ENCODE measurements at regions of chr1 and their contacts with region 1.

Region 1: DNA sequence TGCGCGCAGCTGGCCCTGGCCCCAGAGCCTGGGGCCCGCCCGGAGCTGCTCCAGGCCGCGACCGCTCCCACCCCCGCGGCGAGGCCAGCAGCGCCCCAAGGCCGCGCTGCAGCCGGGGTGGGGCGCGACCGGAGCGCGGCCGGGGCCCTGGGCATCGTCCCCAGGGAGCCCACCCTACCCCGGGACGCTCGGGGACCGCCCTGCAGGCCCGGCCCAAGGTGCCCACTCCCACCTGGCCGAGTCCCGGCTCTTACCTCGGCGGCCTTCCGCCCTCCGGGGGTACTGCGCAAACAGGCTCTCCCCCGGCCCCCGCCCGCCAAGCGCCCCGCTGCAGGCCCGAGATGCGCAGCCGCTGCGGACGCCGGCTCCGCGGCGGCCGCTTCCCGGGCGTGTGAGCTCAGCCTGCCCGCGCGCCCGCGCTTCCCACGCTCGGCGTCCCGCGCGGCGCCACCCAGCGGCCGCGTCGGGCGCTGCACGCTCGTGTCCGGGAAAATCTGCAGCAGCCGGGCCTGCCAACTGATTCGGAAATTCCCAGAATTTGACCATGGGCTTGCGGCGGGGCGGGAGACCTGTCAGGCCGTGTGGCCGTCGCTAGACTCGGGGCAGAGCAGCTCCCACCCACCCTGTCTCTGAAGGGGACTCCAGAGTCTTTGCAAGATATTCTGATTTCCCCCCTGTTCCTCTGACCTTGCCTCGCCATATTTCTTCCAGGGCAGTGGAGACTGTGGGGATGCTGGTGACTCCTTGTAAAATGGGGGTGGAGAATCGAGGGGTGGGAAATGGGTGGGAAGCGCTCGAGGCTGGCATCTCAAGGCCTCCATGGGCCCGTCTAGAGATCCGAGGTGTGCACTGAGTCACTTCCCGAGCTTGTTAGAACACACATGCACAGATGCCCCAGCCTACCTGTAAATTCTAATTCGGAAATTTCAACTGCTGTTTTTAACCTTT is 41.9 kb downstream of the CD34 start:
- DNase-seq: peak; percentile 83
- H3K4me3 ChIP-seq: peak overlapping the region; percentile 71 to 76
- H3K27ac ChIP-seq: peak overlapping the region; percentile 84 to 93
- H3K4me1 ChIP-seq: peaks cover 35% of the 10 kb centered on the region
- H3K27me3 ChIP-seq: no peaks in the 10 kb centered on the region
- CTCF ChIP-seq: peak; percentile 76 to 98 (median 89)
- POLR2A ChIP-seq: no peak

Region 2: GRCh38 chr1:207811920-207812720 is 56.9 kb before region 1 on chr1:
- intact Hi-C with region 1: no loop called
- DNase-seq: peak; percentile 75
- H3K4me3 ChIP-seq: no peak overlapping the region
- H3K27ac ChIP-seq: peak overlapping the region; percentile 19 to 70
- H3K4me1 ChIP-seq: peaks cover 54% of the 10 kb centered on the region
- H3K27me3 ChIP-seq: no peaks in the 10 kb centered on the region
- CTCF ChIP-seq: peak in 2 of 3 experiments; percentile 22 to 35
- POLR2A ChIP-seq: no peak

Region 3: DNA sequence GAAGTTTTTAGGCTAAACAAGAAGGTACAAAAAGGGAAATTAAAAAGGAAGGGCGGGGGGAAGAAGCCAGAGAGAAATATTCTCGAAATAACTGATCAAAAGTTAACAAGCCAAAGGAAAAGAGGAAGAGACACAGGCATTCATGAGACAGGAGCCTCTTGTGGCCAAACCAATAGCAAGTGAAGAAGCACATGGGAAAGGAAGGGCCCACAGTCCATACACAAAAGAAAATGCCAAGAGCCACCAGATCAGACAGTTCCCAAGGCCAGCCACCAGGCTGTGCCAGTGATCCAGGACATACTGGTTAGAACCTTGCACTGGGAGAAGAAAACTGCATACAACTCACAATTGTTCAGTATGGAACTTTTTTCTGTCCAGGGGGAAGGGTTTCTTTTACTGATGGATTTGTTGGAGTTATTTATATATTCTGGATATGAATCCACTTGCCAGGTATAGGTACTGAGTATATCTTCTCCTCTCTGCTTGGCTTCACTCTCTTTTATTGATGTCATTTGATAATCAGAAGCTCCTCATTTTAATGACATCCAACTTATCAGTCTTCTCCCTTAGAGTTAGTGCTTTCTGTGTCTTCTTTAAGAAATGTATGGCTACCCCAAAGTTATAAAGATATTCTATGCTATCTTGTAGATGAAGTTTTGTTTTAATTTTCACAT is 40.4 kb before region 1 on chr1:
- intact Hi-C with region 1: loop called (anchors 5 kb)
- DNase-seq: peak; percentile 88
- H3K4me3 ChIP-seq: no peak overlapping the region
- H3K27ac ChIP-seq: peak overlapping the region; percentile 67 to 95
- H3K4me1 ChIP-seq: peaks cover 66% of the 10 kb centered on the region
- H3K27me3 ChIP-seq: no peaks in the 10 kb centered on the region
- CTCF ChIP-seq: peak; percentile 83 to 85 (median 84)
- POLR2A ChIP-seq: no peak

Measured in testis (tissue), 5 donors.